Activated CD4-positive, alpha-beta T cell treated with anti-CD3 and anti-CD28 coated beads, Interleukin-2, amount 10 ng/mL, durations not matched to agents 7 days and 5 days (primary cell): ENCODE measurements at regions of chr20 and their contacts with region 1.

Region 1: DNA sequence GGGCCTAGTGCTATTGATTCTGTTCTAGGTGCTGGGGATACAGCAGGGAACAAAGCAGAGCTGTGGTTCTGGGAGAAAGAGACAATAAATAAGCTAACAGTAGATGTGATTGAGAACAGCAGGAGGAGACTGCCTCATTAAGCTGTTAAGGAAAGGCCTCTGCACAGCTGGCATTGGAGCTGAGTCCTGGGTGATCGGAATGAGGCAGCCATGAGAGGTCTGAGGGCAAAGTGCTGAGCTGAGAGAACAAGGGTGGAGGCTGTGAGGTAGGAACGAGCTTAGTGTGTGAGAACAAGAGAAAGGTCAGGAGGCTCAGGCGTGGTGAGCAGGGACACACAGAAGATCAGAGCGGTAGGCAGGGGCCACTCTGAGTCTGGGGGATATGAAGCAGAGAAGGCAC is 18.3 kb downstream of the DDX27 start:
- DNase-seq: no peak
- H3K4me3 Mint-ChIP-seq: no peak overlapping the region
- H3K27ac Mint-ChIP-seq: peak overlapping the region; percentile 9
- H3K4me1 Mint-ChIP-seq: no peaks in the 10 kb centered on the region
- H3K27me3 Mint-ChIP-seq: no peaks in the 10 kb centered on the region

Region 2: DNA sequence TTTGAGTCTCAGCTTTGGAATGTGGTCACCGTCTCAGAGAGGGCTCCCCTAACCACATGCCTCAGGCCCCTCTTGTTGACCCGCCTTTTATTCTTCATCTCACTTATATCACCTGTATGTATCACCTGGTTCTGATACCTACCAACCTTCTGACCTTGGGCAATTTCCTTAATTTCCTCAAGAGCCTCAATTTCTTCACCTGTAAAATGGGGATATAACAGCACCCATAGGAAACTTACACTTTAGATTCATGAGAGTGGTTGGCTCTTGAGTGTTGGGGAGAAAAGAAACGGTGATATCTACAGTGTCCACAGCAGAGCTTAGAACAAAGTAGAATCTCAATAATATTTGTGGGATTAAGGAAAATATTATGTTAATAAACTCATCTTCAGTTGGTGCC is 22.3 kb before region 1 on chr20:
- CTCF ChIA-PET with region 1: no interaction called
- POLR2A ChIA-PET with region 1: no interaction called
- DNase-seq: no peak
- H3K4me3 Mint-ChIP-seq: no peak overlapping the region
- H3K27ac Mint-ChIP-seq: no peak overlapping the region
- H3K4me1 Mint-ChIP-seq: peaks cover 14% of the 10 kb centered on the region
- H3K27me3 Mint-ChIP-seq: peaks cover 1% of the 10 kb centered on the region

Region 3: DNA sequence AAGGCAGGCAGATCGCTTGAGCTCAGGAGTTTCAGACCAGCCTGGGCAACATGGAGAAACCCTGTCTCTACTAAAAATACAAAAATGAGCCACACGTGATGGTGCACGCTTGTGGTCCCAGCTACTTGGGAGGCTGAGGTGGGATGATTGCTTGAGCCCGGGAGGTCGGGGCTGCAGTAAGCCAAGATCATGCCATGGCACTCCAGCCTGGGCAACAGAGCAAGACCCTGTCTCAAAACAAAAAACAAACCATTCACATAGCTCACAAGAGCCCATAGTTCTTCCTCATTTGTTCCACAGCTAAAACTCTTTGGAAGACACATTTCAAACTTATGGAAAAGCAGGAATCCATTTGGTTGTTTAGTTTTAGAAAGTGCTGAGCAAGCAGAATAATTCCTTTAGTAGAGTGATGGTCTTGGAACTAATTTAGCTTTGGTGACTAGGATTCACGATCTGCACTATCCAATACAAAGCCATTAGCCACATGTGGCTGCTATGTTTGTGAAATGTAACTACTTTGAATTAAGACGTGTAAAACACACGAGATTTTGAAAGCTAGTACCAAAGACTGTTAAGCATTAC is 36.3 kb after region 1 on chr20:
- CTCF ChIA-PET with region 1: interaction called, 5 read pairs
- POLR2A ChIA-PET with region 1: interaction called, 11 read pairs
- DNase-seq: no peak
- H3K4me3 Mint-ChIP-seq: peak overlapping the region; percentile 27
- H3K27ac Mint-ChIP-seq: peak overlapping the region; percentile 19
- H3K4me1 Mint-ChIP-seq: peaks cover 66% of the 10 kb centered on the region
- H3K27me3 Mint-ChIP-seq: no peaks in the 10 kb centered on the region